Naive thymus-derived CD4-positive, alpha-beta T cell (primary cell): ENCODE measurements at regions of chr10 and their contacts with region 1.

Region 1: DNA sequence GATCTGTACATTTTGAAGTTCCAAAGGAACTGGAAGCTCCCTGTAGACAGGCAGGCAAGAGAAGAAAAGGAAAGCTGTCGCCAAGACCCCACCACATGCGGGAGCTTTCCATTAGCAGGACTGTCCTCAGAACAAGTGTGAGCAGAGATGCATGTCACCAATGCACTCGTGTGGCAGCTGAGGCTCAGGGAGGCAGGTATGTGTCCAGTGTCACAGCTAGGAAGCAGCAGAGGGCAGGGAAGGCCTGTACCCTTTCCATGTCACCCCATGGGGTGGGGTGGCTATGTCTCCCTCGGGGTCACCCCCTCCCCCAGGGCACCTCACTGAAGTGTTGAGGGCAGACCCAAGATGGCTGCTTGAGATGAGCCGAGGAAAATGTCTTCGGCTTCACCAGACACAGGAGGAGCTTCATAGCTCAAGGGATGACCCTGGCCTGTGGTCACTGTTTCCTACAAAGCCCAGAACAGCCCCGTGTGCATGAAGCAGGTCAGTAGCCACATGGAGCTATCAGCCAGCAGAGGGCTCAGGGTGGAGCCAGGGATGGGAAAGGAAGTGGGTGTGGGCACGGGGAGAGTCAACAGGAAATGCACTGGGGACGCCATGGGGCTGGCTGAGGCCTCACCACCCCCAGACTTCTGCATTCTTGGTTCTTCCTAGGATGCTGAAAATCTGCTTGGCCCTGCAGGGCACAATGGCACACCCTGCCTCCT is 96.6 kb downstream of the FAM53B start:
- DNase-seq: peak in 8 of 9 donors; percentile 63 to 79 (median 72)
- ATAC-seq: peak; percentile 85
- H3K4me3 ChIP-seq: peak overlapping the region; percentile 34
- H3K4me3 Mint-ChIP-seq: peak overlapping the region; percentile 69 to 87 (median 80)
- H3K27ac ChIP-seq: peak overlapping the region; percentile 62
- H3K27ac Mint-ChIP-seq: peak overlapping the region; percentile 86 to 97 (median 95)
- H3K4me1 ChIP-seq: peaks cover 68 to 79% of the 10 kb centered on the region in 2 donors
- H3K4me1 Mint-ChIP-seq: peaks cover 46 to 100% (median 87%) of the 10 kb centered on the region in 7 donors
- H3K27me3 ChIP-seq: no peaks in the 10 kb centered on the region
- H3K27me3 Mint-ChIP-seq: no peaks in the 10 kb centered on the region

Region 2: DNA sequence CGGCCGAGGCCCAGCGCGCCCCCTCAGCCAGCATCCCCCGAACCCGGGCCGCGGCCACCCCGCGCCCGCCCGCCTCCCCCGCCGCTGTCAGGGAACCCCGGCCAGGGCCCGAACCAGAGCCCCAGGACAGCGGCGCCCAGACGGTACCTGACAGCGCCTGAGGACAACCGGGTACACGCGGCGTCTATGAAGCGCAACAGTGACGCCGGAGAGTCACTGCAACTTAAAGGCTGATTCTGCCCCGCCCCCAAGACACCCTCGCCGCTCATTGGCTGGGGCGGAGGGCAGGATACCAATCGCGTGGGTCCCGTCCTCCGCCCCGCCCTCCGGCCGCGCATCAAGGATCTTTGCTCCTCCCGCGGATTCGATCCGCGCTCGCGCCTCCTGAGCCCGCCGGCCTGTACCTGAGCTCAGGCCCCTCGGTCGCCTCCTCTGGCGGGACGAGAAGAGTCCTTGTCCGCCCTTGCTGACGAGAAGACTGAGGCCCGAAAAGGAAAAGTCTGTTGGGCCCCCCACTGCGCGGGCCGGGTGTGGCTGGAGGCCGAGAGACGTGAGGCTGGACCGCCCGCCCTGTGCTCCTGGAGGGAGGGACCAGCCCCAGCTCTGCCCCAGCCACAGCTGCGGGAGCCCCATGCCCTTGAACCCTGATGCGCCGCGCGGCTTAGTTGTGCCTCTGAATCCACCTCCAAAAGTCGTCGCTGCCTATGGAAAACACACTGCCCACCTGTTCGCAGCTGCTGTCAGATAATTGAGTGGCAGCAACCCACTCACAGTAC is 228.7 kb before region 1 on chr10 and contains the start of gene OAT:
- CTCF ChIA-PET with region 1: no interaction called
- POLR2A ChIA-PET with region 1: no interaction called
- intact Hi-C with region 1: loop called in 1 of 2 experiments (anchors 10 kb)
- DNase-seq: peak; percentile 90 to 96 (median 94)
- ATAC-seq: peak; percentile 99
- H3K4me3 ChIP-seq: peak within 1 kb of the TSS; percentile 76
- H3K4me3 Mint-ChIP-seq: peak within 1 kb of the TSS; percentile 80 to 91 (median 84)
- H3K27ac ChIP-seq: peak within 1 kb of the TSS; percentile 80
- H3K27ac Mint-ChIP-seq: peak within 1 kb of the TSS in 8 of 9 donors; percentile 31 to 90 (median 83)
- H3K4me1 ChIP-seq: peaks cover 8 to 10% of the 10 kb centered on the region in 2 donors
- H3K4me1 Mint-ChIP-seq: peaks cover 8 to 41% (median 31%) of the 10 kb centered on the region in 7 donors
- H3K27me3 ChIP-seq: no peaks in the 10 kb centered on the region
- H3K27me3 Mint-ChIP-seq: peaks cover 0 to 18% (median 2%) of the 10 kb centered on the region in 5 donors
- total RNA-seq, gene OAT: 29.6 to 47.0 (median 39.1) TPM

Region 3: GRCh38 chr10:124545351-124546054 is 102.1 kb before region 1 on chr10:
- CTCF ChIA-PET with region 1: no interaction called
- POLR2A ChIA-PET with region 1: no interaction called
- intact Hi-C with region 1: no loop called
- DNase-seq: peak in 1 of 9 donors; percentile 10
- ATAC-seq: no peak
- H3K4me3 ChIP-seq: no peak overlapping the region
- H3K4me3 Mint-ChIP-seq: peak overlapping the region in 6 of 10 donors; percentile 18 to 55 (median 39)
- H3K27ac ChIP-seq: no peak overlapping the region
- H3K27ac Mint-ChIP-seq: peak overlapping the region in 4 of 9 donors; percentile 2 to 46 (median 37)
- H3K4me1 ChIP-seq: peaks cover 0 to 17% of the 10 kb centered on the region in 2 donors
- H3K4me1 Mint-ChIP-seq: peaks cover 0 to 29% (median 22%) of the 10 kb centered on the region in 7 donors
- H3K27me3 ChIP-seq: no peaks in the 10 kb centered on the region
- H3K27me3 Mint-ChIP-seq: peaks cover 0 to 5% (median 0%) of the 10 kb centered on the region in 5 donors

Region 4: GRCh38 chr10:124657806-124658205 is 10.2 kb after region 1 on chr10:
- CTCF ChIA-PET with region 1: interaction called, 9 read pairs
- POLR2A ChIA-PET with region 1: interaction called, 55 read pairs
- intact Hi-C with region 1: loop called in 1 of 2 experiments (anchors 1 kb)
- DNase-seq: no peak
- ATAC-seq: peak; percentile 66
- H3K4me3 ChIP-seq: peak overlapping the region; percentile 29
- H3K4me3 Mint-ChIP-seq: peak overlapping the region in 7 of 10 donors; percentile 4 to 52 (median 28)
- H3K27ac ChIP-seq: no peak overlapping the region
- H3K27ac Mint-ChIP-seq: peak overlapping the region in 7 of 9 donors; percentile 33 to 80 (median 69)
- H3K4me1 ChIP-seq: peaks cover 45 to 84% of the 10 kb centered on the region in 2 donors
- H3K4me1 Mint-ChIP-seq: peaks cover 47 to 84% (median 72%) of the 10 kb centered on the region in 7 donors
- H3K27me3 ChIP-seq: no peaks in the 10 kb centered on the region
- H3K27me3 Mint-ChIP-seq: no peaks in the 10 kb centered on the region

Region 5: DNA sequence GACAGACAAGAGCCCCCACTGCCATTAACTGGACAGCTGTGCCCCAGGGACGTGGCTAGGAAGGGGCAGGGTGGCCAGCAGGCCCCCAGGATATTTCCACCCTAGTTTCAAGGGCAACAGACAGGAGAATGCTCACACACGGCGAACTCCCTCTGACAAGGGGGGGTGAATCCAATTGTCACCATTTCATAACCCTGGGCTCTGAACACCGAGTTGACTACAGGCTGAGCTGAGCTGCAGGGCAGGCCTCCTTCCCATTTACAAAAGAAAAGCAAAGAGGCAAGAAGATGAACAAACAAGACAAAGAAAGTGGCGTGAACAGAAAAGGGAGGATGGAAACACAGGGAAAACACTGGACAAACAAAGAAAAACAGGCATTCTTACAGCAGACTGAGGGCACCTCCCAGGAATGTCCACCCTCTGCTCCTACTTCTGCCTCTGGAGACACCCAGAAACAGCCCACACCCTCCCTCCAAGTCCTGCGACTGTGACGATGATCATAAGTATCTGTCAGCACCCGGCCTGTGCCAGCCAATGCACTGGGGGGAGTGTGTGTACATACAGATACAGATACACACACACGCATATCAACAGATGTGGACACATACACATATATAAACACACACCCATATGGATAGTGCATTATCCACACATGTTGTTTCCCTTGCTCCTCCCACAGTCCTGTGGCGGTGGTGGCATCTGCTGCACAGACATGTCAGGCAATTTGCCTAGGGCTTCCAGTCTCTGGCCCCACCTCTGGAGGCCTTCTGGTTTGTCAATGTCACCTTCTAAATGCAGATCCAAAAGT is 30.4 kb after region 1 on chr10:
- CTCF ChIA-PET with region 1: interaction called, 22 read pairs
- POLR2A ChIA-PET with region 1: interaction called, 74 read pairs
- intact Hi-C with region 1: loop called in 1 of 2 experiments (anchors 1 kb)
- DNase-seq: no peak
- ATAC-seq: no peak
- H3K4me3 ChIP-seq: peak overlapping the region; percentile 37
- H3K4me3 Mint-ChIP-seq: peak overlapping the region; percentile 70 to 93 (median 81)
- H3K27ac ChIP-seq: peak overlapping the region; percentile 47
- H3K27ac Mint-ChIP-seq: peak overlapping the region; percentile 79 to 97 (median 91)
- H3K4me1 ChIP-seq: peaks cover 77 to 91% of the 10 kb centered on the region in 2 donors
- H3K4me1 Mint-ChIP-seq: peaks cover 53 to 94% (median 85%) of the 10 kb centered on the region in 7 donors
- H3K27me3 ChIP-seq: no peaks in the 10 kb centered on the region
- H3K27me3 Mint-ChIP-seq: no peaks in the 10 kb centered on the region

Region 6: DNA sequence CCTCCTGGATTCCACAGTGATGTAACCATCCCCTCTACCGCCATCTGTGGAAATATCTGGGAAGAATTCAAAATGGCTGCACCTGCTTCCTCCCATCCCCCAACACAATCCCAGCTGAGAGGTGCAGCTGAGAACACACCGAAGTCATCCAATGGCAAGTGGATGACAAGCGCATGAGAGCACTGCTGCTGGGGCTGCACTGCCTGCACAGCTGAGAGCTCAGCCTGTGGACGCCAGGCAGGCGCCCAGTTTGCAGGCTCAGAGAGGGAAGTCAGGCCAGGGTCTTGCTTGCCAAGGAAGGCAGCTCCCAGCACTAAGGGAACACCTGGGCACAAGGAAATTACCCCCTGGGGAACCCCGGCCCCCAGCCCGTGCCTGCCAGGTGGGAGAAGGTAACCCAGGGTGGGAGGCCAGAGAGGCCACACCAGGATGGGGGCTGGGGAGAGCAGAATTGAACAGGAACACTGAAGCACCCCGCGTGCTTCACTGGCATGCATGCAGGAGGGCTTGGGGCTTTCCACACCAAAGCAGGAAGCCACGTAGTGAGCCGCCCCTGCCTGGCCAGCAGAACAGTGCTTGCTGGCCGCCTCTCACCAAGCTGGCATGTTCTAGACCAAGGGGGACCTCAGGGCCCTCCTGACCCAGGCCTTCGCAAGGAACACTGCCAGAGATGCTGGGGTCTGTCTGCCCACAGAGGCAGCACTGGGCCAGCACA is 50.4 kb after region 1 on chr10:
- CTCF ChIA-PET with region 1: interaction called, 11 read pairs
- POLR2A ChIA-PET with region 1: interaction called, 9 read pairs
- intact Hi-C with region 1: loop called (anchors 1 kb)
- DNase-seq: peak in 4 of 9 donors; percentile 12 to 50 (median 41)
- ATAC-seq: peak; percentile 68
- H3K4me3 ChIP-seq: no peak overlapping the region
- H3K4me3 Mint-ChIP-seq: peak overlapping the region in 9 of 10 donors; percentile 53 to 82 (median 73)
- H3K27ac ChIP-seq: peak overlapping the region; percentile 67
- H3K27ac Mint-ChIP-seq: peak overlapping the region; percentile 84 to 97 (median 91)
- H3K4me1 ChIP-seq: peaks cover 66 to 90% of the 10 kb centered on the region in 2 donors
- H3K4me1 Mint-ChIP-seq: peaks cover 73 to 96% (median 94%) of the 10 kb centered on the region in 7 donors
- H3K27me3 ChIP-seq: no peaks in the 10 kb centered on the region
- H3K27me3 Mint-ChIP-seq: no peaks in the 10 kb centered on the region

Region 7: GRCh38 chr10:124791378-124792348 is 144.1 kb after region 1 on chr10 and contains the start of gene EEF1AKMT2:
- CTCF ChIA-PET with region 1: no interaction called
- POLR2A ChIA-PET with region 1: no interaction called
- intact Hi-C with region 1: loop called in 1 of 2 experiments (anchors 5 kb)
- DNase-seq: peak; percentile 68 to 88 (median 81)
- ATAC-seq: peak; percentile 99
- H3K4me3 ChIP-seq: peak within 1 kb of the TSS; percentile 92
- H3K4me3 Mint-ChIP-seq: peak within 1 kb of the TSS; percentile 90 to 100 (median 98)
- H3K27ac ChIP-seq: peak within 1 kb of the TSS; percentile 77
- H3K27ac Mint-ChIP-seq: peak within 1 kb of the TSS; percentile 89 to 96 (median 95)
- H3K4me1 ChIP-seq: peaks cover 5 to 9% of the 10 kb centered on the region in 2 donors
- H3K4me1 Mint-ChIP-seq: peaks cover 11 to 30% (median 21%) of the 10 kb centered on the region in 7 donors
- H3K27me3 ChIP-seq: no peaks in the 10 kb centered on the region
- H3K27me3 Mint-ChIP-seq: peaks cover 0 to 7% (median 0%) of the 10 kb centered on the region in 5 donors
- total RNA-seq, gene EEF1AKMT2: 11.5 to 23.0 (median 21.0) TPM